ENCODE measurements at regions of chr9 and their contacts with region 1.

Region 1: GRCh38 chr9:129080602-129081387 is at the start of gene DOLPP1:
- DNase-seq: peak; percentile 96 to 100 (median 99)
- ATAC-seq: peak; percentile 94 to 95
- H3K4me3 Mint-ChIP-seq: peak within 1 kb of the TSS; percentile 83 to 93 (median 89)
- H3K27ac Mint-ChIP-seq: peak within 1 kb of the TSS; percentile 72 to 96 (median 84)
- H3K4me1 Mint-ChIP-seq: peaks cover 8 to 38% (median 27%) of the 10 kb centered on the region in 4 donors
- H3K27me3 Mint-ChIP-seq: no peaks in the 10 kb centered on the region
- polyA plus RNA-seq, gene DOLPP1: 5.7 to 7.9 (median 7.1) TPM

Region 2: GRCh38 chr9:129006328-129007034 is 74.3 kb before region 1 on chr9:
- POLR2A ChIA-PET with region 1: no interaction called
- DNase-seq: peak in 7 of 10 donors; percentile 24 to 47 (median 38)
- ATAC-seq: peak; percentile 85 to 88
- H3K4me3 Mint-ChIP-seq: no peak overlapping the region
- H3K27ac Mint-ChIP-seq: peak overlapping the region in 6 of 10 donors; percentile 24 to 83 (median 54)
- H3K4me1 Mint-ChIP-seq: peaks cover 0 to 4% (median under 1%) of the 10 kb centered on the region in 4 donors
- H3K27me3 Mint-ChIP-seq: no peaks in the 10 kb centered on the region

Region 3: GRCh38 chr9:129028192-129028957 is 52.4 kb before region 1 on chr9 and contains the start of gene SH3GLB2:
- POLR2A ChIA-PET with region 1: interaction called, 19 read pairs
- DNase-seq: peak; percentile 78 to 97 (median 90)
- ATAC-seq: peak; percentile 80 to 81
- H3K4me3 Mint-ChIP-seq: peak within 1 kb of the TSS; percentile 64 to 86 (median 80)
- H3K27ac Mint-ChIP-seq: peak within 1 kb of the TSS; percentile 7 to 94 (median 74)
- H3K4me1 Mint-ChIP-seq: peaks cover 7 to 31% (median 19%) of the 10 kb centered on the region in 4 donors
- H3K27me3 Mint-ChIP-seq: no peaks in the 10 kb centered on the region
- polyA plus RNA-seq, gene SH3GLB2: 21.7 to 40.9 (median 37.8) TPM

Region 4: DNA sequence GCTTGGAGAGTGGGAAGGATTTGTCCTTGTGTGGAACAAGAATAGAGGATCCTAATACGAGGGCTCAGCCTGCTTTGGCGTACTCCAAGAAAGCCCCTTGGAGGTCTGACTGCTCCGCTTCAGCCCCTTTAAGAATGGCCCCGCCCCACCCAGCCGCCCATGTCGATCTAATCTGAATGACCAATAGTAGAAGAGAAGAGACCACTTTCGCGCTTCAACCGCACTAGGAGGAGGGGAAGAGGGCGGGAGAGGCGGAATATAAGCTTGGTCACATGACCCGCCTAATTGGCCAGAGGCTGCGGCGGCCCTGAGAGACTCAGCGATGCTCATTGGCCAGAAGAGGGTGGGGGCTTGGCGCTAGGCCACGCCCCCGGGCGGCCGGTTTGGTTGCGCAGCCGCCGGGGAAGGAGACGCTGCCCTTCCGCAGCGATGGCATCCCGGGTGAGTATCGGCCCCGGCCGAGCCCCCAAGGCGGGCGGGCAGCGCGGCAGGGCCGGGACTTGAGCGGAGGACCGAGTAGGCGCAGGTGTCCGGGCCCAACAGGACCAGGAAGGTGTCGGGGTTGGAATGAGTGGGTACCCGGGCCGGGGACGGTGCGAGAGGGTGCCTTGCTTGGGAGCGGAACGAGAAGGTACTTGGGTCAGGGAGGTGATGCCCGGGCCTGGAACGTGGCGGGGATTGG is 44.4 kb before region 1 on chr9 and contains the start of gene MIGA2:
- POLR2A ChIA-PET with region 1: interaction called, 19 read pairs
- DNase-seq: peak; percentile 85 to 98 (median 93)
- ATAC-seq: peak; percentile 97
- H3K4me3 Mint-ChIP-seq: peak within 1 kb of the TSS; percentile 89 to 100 (median 96)
- H3K27ac Mint-ChIP-seq: peak within 1 kb of the TSS; percentile 39 to 96 (median 91)
- H3K4me1 Mint-ChIP-seq: peaks cover 19 to 42% (median 35%) of the 10 kb centered on the region in 4 donors
- H3K27me3 Mint-ChIP-seq: no peaks in the 10 kb centered on the region
- polyA plus RNA-seq, gene MIGA2: 5.9 to 11.3 (median 7.2) TPM

Region 5: GRCh38 chr9:129068990-129069861 is 11.6 kb before region 1 on chr9:
- POLR2A ChIA-PET with region 1: interaction called, 39 read pairs
- DNase-seq: peak; percentile 26 to 87 (median 62)
- ATAC-seq: peak; percentile 95 to 98
- H3K4me3 Mint-ChIP-seq: peak overlapping the region; percentile 58 to 87 (median 74)
- H3K27ac Mint-ChIP-seq: peak overlapping the region; percentile 89 to 96 (median 92)
- H3K4me1 Mint-ChIP-seq: peaks cover 20 to 57% (median 47%) of the 10 kb centered on the region in 4 donors
- H3K27me3 Mint-ChIP-seq: no peaks in the 10 kb centered on the region

Region 6: DNA sequence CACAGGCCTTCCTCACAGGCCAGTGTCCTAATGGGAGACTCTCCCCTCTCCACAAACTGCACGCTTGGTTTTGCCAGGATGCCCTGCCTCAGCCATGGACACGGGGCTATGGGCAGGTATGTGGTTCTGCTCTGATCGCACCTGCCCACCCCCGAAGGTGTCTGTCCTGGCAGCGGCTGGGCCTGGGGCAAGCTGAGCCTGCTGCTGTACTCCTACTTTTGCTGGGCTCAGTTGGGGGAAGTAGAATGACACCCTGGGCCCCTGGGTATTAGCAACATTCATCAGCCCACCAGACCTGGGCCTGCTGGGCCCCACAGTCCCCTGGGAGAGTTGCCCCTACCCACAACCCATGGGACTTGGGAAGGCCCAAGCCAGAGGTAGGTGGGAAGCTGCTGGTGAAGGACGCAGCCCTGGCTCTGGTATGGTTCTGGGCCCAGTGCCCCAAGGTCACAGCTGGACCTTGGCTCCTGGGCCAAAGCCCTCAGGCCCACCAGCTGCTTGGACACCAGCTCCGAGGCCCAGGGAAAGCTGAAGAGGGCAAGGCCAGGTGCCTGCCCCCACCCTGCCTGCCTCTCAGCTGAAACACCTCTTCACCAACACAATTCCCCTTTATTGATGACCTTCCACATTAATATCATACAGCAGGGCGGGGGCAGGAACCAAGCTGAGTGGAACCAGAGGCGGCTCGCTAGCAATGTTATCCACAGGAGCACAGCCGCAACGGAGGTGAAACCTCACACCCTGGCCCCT is 13.6 kb after region 1 on chr9:
- POLR2A ChIA-PET with region 1: interaction called, 12 read pairs
- DNase-seq: no peak
- ATAC-seq: no peak
- H3K4me3 Mint-ChIP-seq: no peak overlapping the region
- H3K27ac Mint-ChIP-seq: no peak overlapping the region
- H3K4me1 Mint-ChIP-seq: peaks cover 0 to 5% (median 0%) of the 10 kb centered on the region in 4 donors
- H3K27me3 Mint-ChIP-seq: no peaks in the 10 kb centered on the region